GM12878 (cell line): ENCODE measurements at regions of chrX and their contacts with region 1.

Region 1: DNA sequence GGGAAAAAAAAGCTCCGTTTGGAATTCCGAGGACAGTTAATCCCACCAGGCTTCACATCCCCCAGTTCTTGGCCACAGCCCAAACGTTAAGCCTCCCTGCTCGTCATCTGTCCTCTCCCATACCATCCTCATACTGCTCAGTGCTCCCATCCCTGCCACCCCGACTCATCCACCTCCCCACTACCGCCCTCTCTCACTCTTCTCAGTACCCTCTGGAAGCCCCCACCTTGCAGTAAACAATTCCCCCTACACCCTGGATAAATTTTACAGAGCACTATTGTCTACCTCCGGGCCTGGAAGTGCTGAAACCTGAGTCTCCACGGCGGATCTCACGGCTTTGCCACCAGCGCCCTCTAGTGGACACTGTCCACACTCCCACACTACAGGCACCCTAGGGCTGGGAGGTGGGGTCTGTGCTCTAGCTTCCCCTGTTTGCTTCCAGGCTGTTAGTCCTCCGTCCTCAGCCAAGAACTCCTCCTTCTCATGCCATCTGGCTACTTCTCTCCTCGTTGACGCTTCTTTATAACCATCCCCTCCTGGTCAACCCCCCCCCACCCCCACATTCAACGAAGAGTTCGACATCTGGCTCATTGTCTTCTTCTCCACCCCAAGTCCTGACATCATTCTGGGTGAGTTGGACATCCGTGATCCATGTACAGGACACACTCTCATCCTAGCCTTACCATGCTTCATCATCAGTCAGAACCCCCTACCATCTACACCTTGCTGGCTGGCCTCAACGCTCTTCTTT is 54.5 kb downstream of the RTL9 start:
- DNase-seq: no peak
- ATAC-seq: peak; percentile 92
- H3K4me3 ChIP-seq: no peak overlapping the region
- H3K27ac ChIP-seq: no peak overlapping the region
- H3K4me1 ChIP-seq: peaks cover 5% of the 10 kb centered on the region
- H3K27me3 ChIP-seq: no peaks in the 10 kb centered on the region
- CTCF ChIP-seq: peak; percentile 85 to 89 (median 88)
- EP300 ChIP-seq: no peak
- POLR2A ChIP-seq: no peak
- RAD21 ChIP-seq: peak; percentile 74

Region 2: DNA sequence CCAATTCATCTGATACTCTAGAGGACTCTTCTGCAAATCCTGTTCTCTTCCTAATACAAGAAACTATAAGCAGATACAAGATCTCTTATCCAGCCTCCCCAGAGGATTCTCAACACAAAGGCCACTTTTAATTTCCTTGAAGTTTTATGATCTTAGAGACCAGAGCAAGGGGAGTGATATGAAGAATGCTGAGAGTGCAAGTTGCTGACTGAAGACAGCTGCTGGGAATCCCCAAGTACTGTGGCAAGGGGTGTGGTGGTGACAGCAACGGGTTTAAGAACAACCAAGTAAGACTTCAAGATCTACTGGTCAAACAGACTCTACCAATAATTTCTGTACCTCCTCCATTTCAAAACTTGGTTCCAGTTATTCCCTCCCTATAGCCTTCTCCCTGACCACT is 102.2 kb before region 1 on chrX:
- CTCF ChIA-PET with region 1: interaction called, 10 read pairs
- POLR2A ChIA-PET with region 1: no interaction called
- RAD21 ChIA-PET with region 1: interaction called, 3 read pairs
- SMC1A ChIA-PET with region 1: interaction called, 5 read pairs
- in situ Hi-C with region 1: no loop called
- intact Hi-C with region 1: loop called (anchors 5 kb)
- DNase-seq: no peak
- ATAC-seq: peak; percentile 89
- H3K4me3 ChIP-seq: no peak overlapping the region
- H3K27ac ChIP-seq: no peak overlapping the region
- H3K4me1 ChIP-seq: no peaks in the 10 kb centered on the region
- H3K27me3 ChIP-seq: no peaks in the 10 kb centered on the region
- CTCF ChIP-seq: no peak
- EP300 ChIP-seq: no peak
- POLR2A ChIP-seq: no peak
- RAD21 ChIP-seq: no peak

Region 3: GRCh38 chrX:110317820-110318658 is 95.1 kb before region 1 on chrX and contains the start of gene AMMECR1:
- CTCF ChIA-PET with region 1: interaction called, 9 read pairs
- POLR2A ChIA-PET with region 1: no interaction called
- RAD21 ChIA-PET with region 1: interaction called, 4 read pairs
- SMC1A ChIA-PET with region 1: interaction called, 6 read pairs
- in situ Hi-C with region 1: no loop called
- intact Hi-C with region 1: loop called (anchors 5 kb)
- DNase-seq: no peak
- ATAC-seq: peak; percentile 73
- H3K4me3 ChIP-seq: peak within 1 kb of the TSS; percentile 79
- H3K27ac ChIP-seq: peak within 1 kb of the TSS; percentile 75
- H3K4me1 ChIP-seq: no peaks in the 10 kb centered on the region; the same call in 1 of the 2 replicates
- H3K27me3 ChIP-seq: no peaks in the 10 kb centered on the region
- CTCF ChIP-seq: no peak
- EP300 ChIP-seq: no peak
- POLR2A ChIP-seq: peak; percentile 91
- RAD21 ChIP-seq: no peak
- polyA plus RNA-seq, gene AMMECR1: 4.9 to 6.4 TPM

Region 4: GRCh38 chrX:110402479-110403230 is 10.5 kb before region 1 on chrX:
- CTCF ChIA-PET with region 1: interaction called, 37 read pairs
- POLR2A ChIA-PET with region 1: no interaction called
- RAD21 ChIA-PET with region 1: no interaction called
- SMC1A ChIA-PET with region 1: interaction called, 7 read pairs
- in situ Hi-C with region 1: no loop called
- intact Hi-C with region 1: no loop called
- DNase-seq: no peak
- ATAC-seq: no peak
- H3K4me3 ChIP-seq: no peak overlapping the region
- H3K27ac ChIP-seq: no peak overlapping the region
- H3K4me1 ChIP-seq: no peaks in the 10 kb centered on the region
- H3K27me3 ChIP-seq: no peaks in the 10 kb centered on the region
- CTCF ChIP-seq: no peak
- EP300 ChIP-seq: no peak
- POLR2A ChIP-seq: no peak
- RAD21 ChIP-seq: no peak

Region 5: DNA sequence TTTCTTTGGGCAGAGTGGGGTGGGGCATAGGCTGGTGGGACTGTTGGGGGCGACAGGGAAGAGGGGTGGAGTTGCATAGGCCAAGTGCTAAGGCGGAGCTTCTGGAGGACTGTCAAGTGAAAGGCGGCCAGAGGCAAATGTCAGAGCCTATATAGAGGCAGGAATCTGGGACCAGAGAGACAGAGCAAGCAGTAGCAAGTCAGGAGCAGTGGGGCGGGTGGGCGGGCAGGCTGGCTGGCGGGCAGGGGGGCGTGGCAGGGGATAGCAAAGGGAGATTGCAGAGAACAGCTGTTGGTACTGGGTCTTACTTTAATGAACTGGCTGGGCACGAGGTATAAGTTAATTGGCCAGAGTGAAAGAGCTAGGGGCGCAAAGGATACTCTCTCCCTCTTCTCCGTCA is 35.3 kb after region 1 on chrX:
- CTCF ChIA-PET with region 1: no interaction called
- POLR2A ChIA-PET with region 1: no interaction called
- RAD21 ChIA-PET with region 1: no interaction called
- SMC1A ChIA-PET with region 1: no interaction called
- in situ Hi-C with region 1: no loop called
- intact Hi-C with region 1: no loop called
- DNase-seq: no peak
- ATAC-seq: no peak
- H3K4me3 ChIP-seq: no peak overlapping the region
- H3K27ac ChIP-seq: no peak overlapping the region
- H3K4me1 ChIP-seq: no peaks in the 10 kb centered on the region
- H3K27me3 ChIP-seq: peaks cover 0 to 4% of the 10 kb centered on the region in 2 experiments; a peak in 1 of 4 replicates
- CTCF ChIP-seq: no peak
- EP300 ChIP-seq: no peak
- POLR2A ChIP-seq: no peak
- RAD21 ChIP-seq: no peak

Region 6: DNA sequence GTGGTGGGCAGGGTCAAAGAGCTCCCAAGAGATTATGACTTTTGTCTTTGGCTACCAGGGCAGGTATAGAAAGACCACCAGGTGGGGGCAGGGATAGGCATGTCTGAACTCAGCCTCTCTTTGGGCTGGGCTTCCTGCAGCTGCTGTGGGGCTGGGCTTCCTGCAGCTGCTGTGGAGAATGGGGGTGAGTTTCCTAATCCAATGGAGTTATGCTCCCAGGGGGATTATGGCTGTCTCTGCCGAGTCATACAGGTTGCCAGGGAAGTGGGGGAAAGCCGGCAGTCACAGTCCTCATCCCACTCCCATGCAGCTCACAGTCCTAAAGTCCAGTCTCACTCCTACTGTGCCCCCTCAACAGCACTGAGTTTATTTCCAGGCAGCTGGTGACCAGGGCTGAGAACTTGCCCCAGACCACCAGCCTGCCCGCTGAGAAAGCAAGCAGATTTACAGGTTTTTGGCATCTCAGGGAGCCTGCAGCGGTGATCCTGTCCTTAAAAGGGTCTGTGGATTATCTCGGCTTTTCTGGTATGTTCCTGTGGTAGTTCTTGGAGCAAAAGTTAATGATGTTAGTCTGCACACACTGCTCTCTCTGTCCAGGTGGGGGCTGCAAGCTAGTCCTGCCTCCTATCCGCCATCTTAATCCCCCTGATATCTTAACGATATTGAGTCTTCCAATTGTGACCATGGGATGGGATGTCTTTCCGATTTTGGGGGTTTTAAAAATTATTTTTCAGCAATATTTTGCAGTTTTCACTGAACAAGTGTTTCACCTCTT is 78.9 kb after region 1 on chrX:
- CTCF ChIA-PET with region 1: no interaction called
- POLR2A ChIA-PET with region 1: no interaction called
- RAD21 ChIA-PET with region 1: no interaction called
- SMC1A ChIA-PET with region 1: no interaction called
- in situ Hi-C with region 1: no loop called
- intact Hi-C with region 1: no loop called
- DNase-seq: no peak
- ATAC-seq: no peak
- H3K4me3 ChIP-seq: no peak overlapping the region
- H3K27ac ChIP-seq: no peak overlapping the region
- H3K4me1 ChIP-seq: no peaks in the 10 kb centered on the region
- H3K27me3 ChIP-seq: no peaks in the 10 kb centered on the region
- CTCF ChIP-seq: no peak
- EP300 ChIP-seq: no peak
- POLR2A ChIP-seq: no peak
- RAD21 ChIP-seq: no peak